AG04449 (cell line): ENCODE measurements at regions of chr1 and their contacts with region 1.

Region 1: GRCh38 chr1:67214420-67215174 is 48.3 kb downstream of the IL23R start:
- DNase-seq: no peak
- H3K4me3 ChIP-seq: no peak overlapping the region
- CTCF ChIP-seq: peak; percentile 36

Region 2: GRCh38 chr1:66764994-66765578 is 449.5 kb before region 1 on chr1:
- CTCF ChIA-PET with region 1: interaction called, 164 read pairs
- POLR2A ChIA-PET with region 1: no interaction called
- DNase-seq: peak; percentile 10
- H3K4me3 ChIP-seq: no peak overlapping the region
- CTCF ChIP-seq: peak; percentile 50

Region 3: DNA sequence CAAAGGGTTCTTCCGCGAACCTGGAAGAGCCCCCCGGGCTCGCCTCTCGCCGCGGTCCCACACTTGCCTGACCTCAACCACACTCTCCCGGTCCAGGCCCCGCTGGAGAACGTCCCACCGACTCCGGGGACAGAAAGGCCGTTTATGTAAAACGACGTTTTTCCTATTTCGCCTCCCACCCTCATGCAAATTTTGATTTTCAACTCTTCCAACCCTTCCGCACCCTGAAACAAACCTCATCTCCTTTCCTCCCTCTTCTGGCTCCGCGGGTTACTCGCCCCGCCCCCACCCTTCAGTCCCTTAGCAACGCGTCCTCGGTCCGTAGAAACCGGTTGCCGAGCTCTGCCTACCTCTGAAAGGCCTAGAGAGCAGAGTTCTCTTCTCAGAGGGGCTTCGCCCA is 79.9 kb before region 1 on chr1 and contains the start of gene C1orf141:
- CTCF ChIA-PET with region 1: interaction called, 14 read pairs
- POLR2A ChIA-PET with region 1: no interaction called
- DNase-seq: no peak
- H3K4me3 ChIP-seq: peak within 1 kb of the TSS; percentile 32
- CTCF ChIP-seq: no peak

Region 4: DNA sequence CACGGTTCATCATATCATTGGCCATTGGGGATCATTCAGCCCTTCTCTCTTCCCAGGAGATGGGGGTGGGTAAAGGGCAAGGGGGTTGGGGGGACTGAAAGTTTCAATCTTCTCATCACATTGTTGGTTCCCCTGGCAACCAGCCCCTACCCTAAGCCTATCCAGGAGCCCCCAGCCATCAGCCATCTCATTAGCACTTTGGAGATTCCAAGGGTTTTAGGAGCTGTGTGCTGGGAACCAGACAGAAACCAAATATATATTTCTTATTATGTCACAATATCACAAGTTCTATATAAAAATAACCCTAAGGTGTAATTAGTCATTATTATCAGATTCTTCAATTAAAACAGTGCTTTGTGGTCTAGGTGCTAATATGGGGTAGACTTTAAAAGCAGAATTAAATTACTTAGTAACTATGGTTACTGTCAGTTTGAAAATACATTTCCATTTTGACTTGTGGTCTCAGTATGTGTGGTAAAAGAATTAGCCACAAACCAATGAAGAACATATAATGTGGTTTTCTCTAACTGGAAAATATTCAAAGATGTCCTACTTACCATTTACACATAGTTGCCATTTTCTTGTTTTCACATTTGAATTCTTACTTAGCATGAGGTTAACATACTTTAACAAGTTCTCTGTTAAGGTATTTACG is 20.3 kb before region 1 on chr1:
- CTCF ChIA-PET with region 1: interaction called, 21 read pairs
- POLR2A ChIA-PET with region 1: no interaction called
- DNase-seq: no peak
- H3K4me3 ChIP-seq: no peak overlapping the region
- CTCF ChIP-seq: no peak

Region 5: GRCh38 chr1:67227196-67227595 is 12.6 kb after region 1 on chr1:
- CTCF ChIA-PET with region 1: interaction called, 98 read pairs
- POLR2A ChIA-PET with region 1: no interaction called
- DNase-seq: no peak
- H3K4me3 ChIP-seq: no peak overlapping the region
- CTCF ChIP-seq: no peak

Region 6: GRCh38 chr1:67347688-67348472 is 133.3 kb after region 1 on chr1:
- CTCF ChIA-PET with region 1: interaction called, 31 read pairs
- POLR2A ChIA-PET with region 1: no interaction called
- DNase-seq: no peak
- H3K4me3 ChIP-seq: peak overlapping the region; percentile 27
- CTCF ChIP-seq: peak; percentile 71

Region 7: GRCh38 chr1:67500413-67500959 is 285.9 kb after region 1 on chr1:
- CTCF ChIA-PET with region 1: interaction called, 276 read pairs
- POLR2A ChIA-PET with region 1: interaction called, 3 read pairs
- DNase-seq: no peak
- H3K4me3 ChIP-seq: no peak overlapping the region
- CTCF ChIP-seq: peak; percentile 99